Vagina (tissue), 2 donors: ENCODE measurements at regions of chr1 and their contacts with region 1.

Region 1: GRCh38 chr1:162612606-162613400 is 19.5 kb upstream of the DDR2 start:
- DNase-seq: peak in 1 of 2 donors; percentile 88
- H3K4me3 ChIP-seq: no peak overlapping the region
- H3K27ac ChIP-seq: peak overlapping the region; percentile 62
- H3K4me1 ChIP-seq: no peaks in the 10 kb centered on the region
- H3K27me3 ChIP-seq: no peaks in the 10 kb centered on the region
- CTCF ChIP-seq: no peak
- POLR2A ChIP-seq: no peak

Region 2: DNA sequence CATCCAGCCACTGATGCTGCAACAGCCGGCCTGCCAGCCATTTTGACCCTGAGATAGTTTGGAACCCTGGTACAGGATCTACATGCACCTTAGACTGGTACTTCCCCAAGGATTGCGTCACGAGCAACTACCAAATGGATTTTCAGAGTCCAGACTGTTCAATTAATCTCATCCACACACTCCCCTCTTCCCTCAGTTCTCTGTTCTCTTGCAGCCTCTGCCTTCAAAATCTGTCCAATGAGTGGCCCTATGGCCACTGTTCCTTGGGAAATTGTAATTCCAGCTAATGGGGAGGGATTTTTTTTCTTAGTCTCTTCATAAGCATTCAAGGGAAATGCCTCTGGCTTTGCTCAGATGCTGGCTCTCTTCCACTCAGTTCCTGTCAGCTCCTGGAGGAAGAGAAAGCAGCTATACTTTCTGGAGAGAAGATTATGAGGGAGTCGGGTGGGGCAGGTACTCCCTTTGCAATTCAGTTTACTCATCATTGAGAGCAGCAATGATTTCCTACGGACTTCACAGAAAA is 71.1 kb before region 1 on chr1:
- intact Hi-C with region 1: no loop called
- DNase-seq: peak in 1 of 2 donors; percentile 94
- H3K4me3 ChIP-seq: no peak overlapping the region
- H3K27ac ChIP-seq: peak overlapping the region; percentile 45
- H3K4me1 ChIP-seq: no peaks in the 10 kb centered on the region
- H3K27me3 ChIP-seq: no peaks in the 10 kb centered on the region
- CTCF ChIP-seq: no peak
- POLR2A ChIP-seq: no peak

Region 3: DNA sequence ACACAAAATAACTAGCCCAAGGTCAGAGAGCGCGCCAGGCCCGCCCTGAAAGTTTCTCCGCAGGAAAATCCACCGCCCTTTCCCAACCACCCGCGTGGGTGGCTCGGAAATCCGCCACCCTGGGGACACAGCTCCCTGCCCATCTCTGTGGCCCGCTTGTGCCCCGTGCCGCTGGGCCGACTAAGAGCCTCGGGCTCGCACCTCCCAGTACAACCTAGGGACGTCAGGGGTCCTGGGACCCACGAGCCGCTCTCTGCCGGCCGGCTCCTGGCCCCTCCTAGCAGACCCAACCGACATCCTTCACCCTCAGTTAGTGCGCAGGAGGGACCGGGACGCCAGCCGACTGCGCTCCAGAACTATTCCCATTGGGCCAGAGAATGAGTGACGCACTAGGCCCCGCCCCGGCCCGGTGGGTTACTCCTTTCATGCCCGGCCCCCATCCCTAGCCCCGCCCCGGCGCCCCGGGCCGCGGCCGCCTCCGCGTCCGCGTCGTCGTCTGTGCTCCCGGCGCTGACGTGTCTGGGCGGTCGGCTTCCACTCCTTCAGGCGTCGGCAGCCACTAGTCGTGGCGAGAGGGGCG is 51.7 kb before region 1 on chr1:
- intact Hi-C with region 1: loop called (anchors 2 kb)
- DNase-seq: peak; percentile 99
- H3K4me3 ChIP-seq: peak overlapping the region; percentile 70 to 86
- H3K27ac ChIP-seq: peak overlapping the region; percentile 97
- H3K4me1 ChIP-seq: peaks cover 47% of the 10 kb centered on the region
- H3K27me3 ChIP-seq: no peaks in the 10 kb centered on the region
- CTCF ChIP-seq: no peak
- POLR2A ChIP-seq: peak in 1 of 2 donors; percentile 73

Region 4: DNA sequence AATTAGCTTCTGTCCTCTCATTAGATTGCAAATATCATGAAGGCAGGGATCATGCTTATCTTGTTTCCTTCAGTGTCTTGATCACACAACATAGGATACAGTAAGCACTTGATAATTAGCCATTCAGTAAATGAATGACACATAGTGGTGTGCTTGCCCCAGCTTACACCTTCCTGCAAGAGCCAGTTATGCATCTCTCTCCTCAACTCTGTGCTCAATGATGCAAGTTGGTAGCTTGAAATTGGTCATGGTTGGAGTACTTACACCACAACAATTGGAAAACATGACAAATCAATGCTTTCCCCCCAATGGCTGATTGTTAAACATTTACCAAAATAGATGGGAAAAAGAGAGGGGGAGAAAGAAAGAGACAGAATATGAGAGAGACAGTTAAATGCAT is 838.2 kb after region 1 on chr1:
- intact Hi-C with region 1: no loop called
- DNase-seq: no peak
- H3K4me3 ChIP-seq: no peak overlapping the region
- H3K27ac ChIP-seq: no peak overlapping the region
- H3K4me1 ChIP-seq: no peaks in the 10 kb centered on the region
- H3K27me3 ChIP-seq: no peaks in the 10 kb centered on the region
- CTCF ChIP-seq: no peak
- POLR2A ChIP-seq: no peak